Motor neuron (in vitro differentiated cells): ENCODE measurements at regions of chr1 and their contacts with region 1.

Region 1: DNA sequence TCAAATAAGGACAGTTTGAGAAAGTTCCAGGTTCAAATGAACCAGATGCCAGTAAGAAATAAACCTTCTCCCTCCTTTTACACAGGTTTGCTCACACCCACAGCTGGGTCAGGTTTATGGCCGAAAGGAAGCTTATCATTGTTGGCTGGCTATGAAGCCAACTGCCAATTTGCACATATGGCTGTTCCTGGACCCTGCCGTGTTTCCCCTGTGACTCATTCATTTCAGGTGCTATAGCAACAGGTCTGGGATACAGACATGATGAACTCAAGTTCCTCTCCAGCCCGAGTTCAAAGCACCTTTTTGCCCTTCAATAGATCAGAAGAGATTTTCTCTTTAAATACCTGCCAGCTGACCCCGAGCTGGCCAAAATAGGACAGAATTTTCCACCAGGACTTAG is 134.4 kb upstream of the SMYD2 start:
- ATAC-seq: peak in 1 of 8 experiments; percentile 28
- H3K4me3 ChIP-seq: no peak overlapping the region
- H3K27ac ChIP-seq: no peak overlapping the region
- H3K4me1 ChIP-seq: peaks cover 22 to 23% of the 10 kb centered on the region in 2 donors

Region 2: DNA sequence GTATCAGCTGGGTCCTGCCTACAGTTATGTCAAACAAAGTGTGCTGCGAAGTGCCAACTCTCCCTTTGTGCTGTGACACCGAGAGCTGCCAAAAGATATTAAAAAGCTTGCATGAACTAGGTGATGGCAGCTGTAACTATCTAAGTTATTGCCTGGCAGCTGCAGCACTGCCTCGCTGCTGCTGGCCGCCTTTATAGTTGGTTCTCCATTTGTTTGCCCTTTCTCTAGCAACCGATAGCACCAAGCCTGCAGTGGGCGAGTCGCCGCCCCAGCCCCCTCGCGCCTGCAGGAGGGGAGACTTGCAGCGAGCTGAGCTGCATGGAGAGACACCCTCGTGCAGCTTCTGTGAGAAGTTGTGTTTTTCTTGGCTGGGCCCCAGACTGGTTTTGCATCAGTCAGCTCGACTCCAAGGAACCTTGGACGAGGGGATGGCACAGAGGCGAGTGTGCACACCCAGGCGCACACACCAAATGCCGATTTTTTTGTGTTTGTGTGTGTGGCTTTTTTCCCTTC is 764.9 kb before region 1 on chr1:
- in situ Hi-C with region 1: loop called in 1 of 9 experiments (anchors 25 kb)
- ATAC-seq: peak in 3 of 8 experiments; percentile 22 to 83 (median 72)
- H3K4me3 ChIP-seq: no peak overlapping the region
- H3K27ac ChIP-seq: no peak overlapping the region
- H3K4me1 ChIP-seq: no peaks in the 10 kb centered on the region

Region 3: GRCh38 chr1:213947200-213947775 is 199.2 kb before region 1 on chr1:
- in situ Hi-C with region 1: no loop called
- ATAC-seq: no peak
- H3K4me3 ChIP-seq: no peak overlapping the region
- H3K27ac ChIP-seq: no peak overlapping the region
- H3K4me1 ChIP-seq: no peaks in the 10 kb centered on the region

Region 4: GRCh38 chr1:214296860-214297745 is 150.6 kb after region 1 on chr1:
- in situ Hi-C with region 1: no loop called
- ATAC-seq: peak in 7 of 8 experiments; percentile 34 to 92 (median 56)
- H3K4me3 ChIP-seq: no peak overlapping the region
- H3K27ac ChIP-seq: peak overlapping the region in 1 of 2 donors; percentile 35
- H3K4me1 ChIP-seq: peaks cover 42 to 45% of the 10 kb centered on the region in 2 donors